Left lung (tissue), 14 donors: ENCODE measurements at regions of chr16 and their contacts with region 1.

Region 1: DNA sequence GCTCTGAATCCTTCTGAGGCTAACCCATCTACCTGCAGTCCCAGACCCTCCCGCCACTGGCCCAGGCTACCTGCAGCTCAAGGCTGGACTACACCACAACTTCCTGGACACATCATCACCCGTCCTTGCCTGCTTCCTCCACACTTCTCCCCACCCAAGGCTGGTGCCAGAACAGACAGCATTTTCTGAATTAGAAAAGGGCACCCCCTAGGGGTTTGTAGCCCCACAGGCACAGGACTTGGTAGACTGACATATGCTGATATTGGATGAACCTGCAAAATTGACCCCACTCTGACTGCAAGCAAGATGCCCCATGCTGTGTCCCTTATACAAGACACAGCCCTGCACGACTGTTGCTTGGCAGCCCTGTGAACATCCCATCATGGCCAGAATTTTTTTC is 271.5 kb upstream of the C16orf82 start:
- DNase-seq: no peak
- ATAC-seq: no peak
- H3K4me3 ChIP-seq: no peak overlapping the region
- H3K27ac ChIP-seq: no peak overlapping the region
- H3K4me1 ChIP-seq: no peaks in the 10 kb centered on the region
- H3K27me3 ChIP-seq: peaks cover 0 to 13% of the 10 kb centered on the region in 2 donors
- CTCF ChIP-seq: no peak

Region 2: DNA sequence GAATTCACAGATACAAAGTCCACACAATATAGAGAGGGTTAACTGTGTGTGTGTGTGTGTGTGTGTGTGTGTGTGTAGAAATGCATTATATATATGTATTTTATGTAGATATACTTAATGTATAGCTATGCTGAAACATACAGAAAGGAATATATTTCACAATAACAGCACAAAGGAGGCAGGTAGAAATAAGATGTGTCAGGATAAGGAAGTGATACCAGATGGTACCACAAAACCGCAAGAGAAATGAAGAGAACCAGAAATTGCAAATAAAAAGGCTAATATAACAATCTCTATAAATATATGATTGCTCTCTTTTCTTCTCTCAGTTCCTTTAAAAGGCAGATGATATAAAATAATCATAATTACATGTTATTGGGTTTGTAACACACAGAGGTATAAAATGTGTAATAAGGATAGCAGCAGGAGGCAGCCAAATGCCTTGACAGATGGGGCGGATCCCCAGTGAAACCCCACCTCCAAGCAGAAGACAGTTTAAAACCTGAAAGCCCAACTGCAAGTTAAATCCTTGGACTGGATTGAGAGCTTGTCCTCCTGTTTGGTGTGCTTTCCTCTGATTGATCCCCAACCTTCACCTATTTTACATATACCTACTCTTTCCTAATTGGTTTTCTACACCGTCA is 93.8 kb before region 1 on chr16:
- intact Hi-C with region 1: no loop called
- DNase-seq: no peak
- ATAC-seq: no peak
- H3K4me3 ChIP-seq: no peak overlapping the region
- H3K27ac ChIP-seq: no peak overlapping the region
- H3K4me1 ChIP-seq: no peaks in the 10 kb centered on the region
- H3K27me3 ChIP-seq: no peaks in the 10 kb centered on the region
- CTCF ChIP-seq: no peak

Region 3: DNA sequence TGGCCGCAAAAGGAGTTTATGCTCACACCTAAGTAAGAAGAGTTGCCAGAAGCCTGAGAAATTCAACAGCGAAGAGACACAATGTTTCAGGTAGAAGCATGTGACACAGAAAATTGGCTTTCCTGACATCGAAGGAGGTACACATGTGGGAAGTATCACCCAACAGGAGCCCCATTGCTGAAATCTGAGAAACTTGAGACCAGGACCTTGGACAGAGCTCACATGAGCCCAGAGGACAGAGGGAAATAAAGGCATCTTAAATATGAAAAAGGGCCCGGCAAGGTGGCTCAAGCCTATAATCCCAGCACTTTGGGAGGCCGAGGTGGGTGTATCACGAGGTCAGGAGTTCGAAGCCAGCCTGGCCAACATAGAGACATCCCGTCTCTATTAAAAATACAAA is 32.6 kb before region 1 on chr16:
- intact Hi-C with region 1: loop called in 1 of 2 experiments (anchors 5 kb)
- DNase-seq: no peak
- ATAC-seq: no peak
- H3K4me3 ChIP-seq: no peak overlapping the region
- H3K27ac ChIP-seq: no peak overlapping the region
- H3K4me1 ChIP-seq: no peaks in the 10 kb centered on the region
- H3K27me3 ChIP-seq: no peaks in the 10 kb centered on the region
- CTCF ChIP-seq: no peak

Region 4: GRCh38 chr16:26905336-26905735 is 110.2 kb after region 1 on chr16:
- intact Hi-C with region 1: no loop called
- DNase-seq: no peak
- ATAC-seq: no peak
- H3K4me3 ChIP-seq: no peak overlapping the region
- H3K27ac ChIP-seq: no peak overlapping the region
- H3K4me1 ChIP-seq: no peaks in the 10 kb centered on the region
- H3K27me3 ChIP-seq: no peaks in the 10 kb centered on the region
- CTCF ChIP-seq: no peak

Region 5: DNA sequence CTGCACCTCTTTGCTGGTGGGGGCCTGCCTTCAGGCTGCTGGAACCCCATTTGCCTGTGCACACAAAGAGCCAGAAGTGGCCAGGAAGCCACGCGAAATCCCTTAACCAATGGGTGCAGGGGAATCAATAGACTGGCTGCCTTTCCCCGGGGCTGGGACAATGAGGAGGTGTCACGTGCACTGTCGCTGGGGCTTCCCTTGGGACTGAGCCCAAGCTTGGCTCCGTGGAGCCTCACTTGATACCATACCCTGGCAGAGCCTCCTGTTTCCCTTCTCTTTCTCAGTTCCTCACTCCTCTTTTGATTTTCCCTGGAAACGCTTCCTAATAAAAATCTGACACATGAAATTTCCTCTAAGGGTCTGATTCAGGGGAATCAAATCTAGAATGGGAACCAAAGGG is 232.8 kb after region 1 on chr16:
- intact Hi-C with region 1: no loop called
- DNase-seq: no peak
- ATAC-seq: no peak
- H3K4me3 ChIP-seq: no peak overlapping the region
- H3K27ac ChIP-seq: no peak overlapping the region
- H3K4me1 ChIP-seq: no peaks in the 10 kb centered on the region
- H3K27me3 ChIP-seq: no peaks in the 10 kb centered on the region
- CTCF ChIP-seq: no peak